Common myeloid progenitor, CD34-positive (primary cell): ENCODE measurements at regions of chr5 and their contacts with region 1.

Region 1: GRCh38 chr5:90783460-90784333 is 225.1 kb downstream of the ADGRV1 start:
- DNase-seq: peak; percentile 55 to 80 (median 73)
- H3K4me3 ChIP-seq: no peak overlapping the region
- H3K27ac ChIP-seq: no peak overlapping the region
- H3K4me1 ChIP-seq: peaks cover 0 to 6% (median 3%) of the 10 kb centered on the region in 4 experiments
- H3K27me3 ChIP-seq: no peaks in the 10 kb centered on the region

Region 2: DNA sequence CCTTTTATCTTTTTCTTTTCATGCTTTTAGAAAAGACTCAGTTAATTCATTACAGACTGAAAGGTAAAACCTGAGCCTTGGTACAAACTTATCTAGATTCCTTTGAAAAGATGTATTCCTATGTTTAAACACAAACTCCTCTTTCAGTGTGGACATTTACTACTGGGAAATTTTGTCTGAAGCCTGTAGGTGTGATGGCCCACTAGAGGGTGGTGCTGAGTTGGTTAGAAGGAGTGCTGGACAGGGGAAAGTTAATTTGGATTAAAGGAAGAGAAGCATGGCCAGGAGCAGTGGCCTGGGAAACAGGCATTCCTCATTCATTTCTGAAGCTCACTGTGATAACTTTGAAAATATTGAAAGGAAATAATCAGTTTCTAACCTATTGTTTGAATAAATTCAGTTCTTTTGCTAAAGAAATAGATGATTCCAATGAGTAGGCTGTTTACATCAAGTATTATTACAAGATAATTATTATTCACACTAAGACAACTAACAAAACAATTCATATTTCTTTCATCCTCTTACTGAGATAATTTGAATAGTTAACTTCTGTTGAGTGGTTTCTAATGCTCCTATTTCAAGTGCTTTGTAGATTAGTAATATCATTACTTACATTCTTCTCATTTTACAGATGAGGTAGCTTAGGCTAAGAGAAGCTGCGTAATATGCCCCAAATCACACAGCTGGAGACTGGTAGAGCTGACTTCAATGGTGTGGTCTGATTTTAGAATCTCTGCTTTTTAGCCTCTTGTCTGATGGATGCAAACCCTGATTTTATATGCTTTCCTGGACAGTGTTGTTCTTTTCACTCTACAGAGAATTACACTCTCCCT is 74.2 kb before region 1 on chr5:
- CTCF ChIA-PET with region 1: interaction called, 11 read pairs
- POLR2A ChIA-PET with region 1: no interaction called
- DNase-seq: peak; percentile 31 to 50 (median 39)
- H3K4me3 ChIP-seq: no peak overlapping the region
- H3K27ac ChIP-seq: no peak overlapping the region
- H3K4me1 ChIP-seq: no peaks in the 10 kb centered on the region
- H3K27me3 ChIP-seq: no peaks in the 10 kb centered on the region

Region 3: DNA sequence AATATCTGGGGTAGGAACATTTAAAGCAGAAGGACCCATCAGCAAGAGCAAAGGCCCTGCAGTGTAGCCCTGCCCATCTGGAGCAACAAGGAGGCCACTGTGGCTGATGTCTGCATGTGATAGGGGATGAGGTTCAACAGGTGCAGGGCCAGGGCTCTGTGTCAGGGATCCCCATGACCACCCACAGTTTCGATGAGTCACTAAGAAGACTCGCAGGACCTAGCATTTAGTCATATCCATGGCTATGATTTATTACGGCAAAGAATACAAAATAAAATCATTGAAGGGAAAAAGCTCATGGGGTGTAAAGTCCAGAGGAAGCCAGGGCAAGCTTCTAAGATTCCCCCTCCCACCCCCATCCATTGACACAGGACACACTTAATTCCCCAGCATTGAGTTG is 36.5 kb before region 1 on chr5:
- CTCF ChIA-PET with region 1: no interaction called
- POLR2A ChIA-PET with region 1: no interaction called
- DNase-seq: no peak
- H3K4me3 ChIP-seq: no peak overlapping the region
- H3K27ac ChIP-seq: no peak overlapping the region
- H3K4me1 ChIP-seq: no peaks in the 10 kb centered on the region
- H3K27me3 ChIP-seq: no peaks in the 10 kb centered on the region